ENCODE measurements at regions of chr19 and their contacts with region 1.

Region 1: GRCh38 chr19:7004313-7004931 is 16.8 kb downstream of the MBD3L2B start:
- DNase-seq: no peak
- H3K4me3 Mint-ChIP-seq: no peak overlapping the region
- H3K27ac Mint-ChIP-seq: no peak overlapping the region
- H3K4me1 Mint-ChIP-seq: peaks cover 16% of the 10 kb centered on the region
- H3K27me3 Mint-ChIP-seq: no peaks in the 10 kb centered on the region

Region 2: GRCh38 chr19:6947745-6948144 is 56.7 kb before region 1 on chr19:
- intact Hi-C with region 1: loop called (anchors 1 kb)
- DNase-seq: peak; percentile 56
- H3K4me3 Mint-ChIP-seq: peak overlapping the region; percentile 48
- H3K27ac Mint-ChIP-seq: peak overlapping the region; percentile 81
- H3K4me1 Mint-ChIP-seq: peaks cover 22% of the 10 kb centered on the region
- H3K27me3 Mint-ChIP-seq: no peaks in the 10 kb centered on the region

Region 3: GRCh38 chr19:7242601-7243258 is 238.3 kb after region 1 on chr19:
- intact Hi-C with region 1: no loop called
- DNase-seq: no peak
- H3K4me3 Mint-ChIP-seq: no peak overlapping the region
- H3K27ac Mint-ChIP-seq: no peak overlapping the region
- H3K4me1 Mint-ChIP-seq: no peaks in the 10 kb centered on the region
- H3K27me3 Mint-ChIP-seq: peaks cover 4% of the 10 kb centered on the region

Measured in activated T-helper 1 cell treated with anti-CD3 and anti-CD28 coated beads, Interleukin-12 subunit alpha, Interleukin-12 subunit beta, Interleukin-2, Interleukin-4 antibody, amounts not matched to agents 30 ng/mL and 10 ng/mL and 1 ng/mL, durations not matched to agents 14 hours and 24 hours and 36 hours (primary cell).